ENCODE measurements at regions of chr21 and their contacts with region 1.

Region 1: DNA sequence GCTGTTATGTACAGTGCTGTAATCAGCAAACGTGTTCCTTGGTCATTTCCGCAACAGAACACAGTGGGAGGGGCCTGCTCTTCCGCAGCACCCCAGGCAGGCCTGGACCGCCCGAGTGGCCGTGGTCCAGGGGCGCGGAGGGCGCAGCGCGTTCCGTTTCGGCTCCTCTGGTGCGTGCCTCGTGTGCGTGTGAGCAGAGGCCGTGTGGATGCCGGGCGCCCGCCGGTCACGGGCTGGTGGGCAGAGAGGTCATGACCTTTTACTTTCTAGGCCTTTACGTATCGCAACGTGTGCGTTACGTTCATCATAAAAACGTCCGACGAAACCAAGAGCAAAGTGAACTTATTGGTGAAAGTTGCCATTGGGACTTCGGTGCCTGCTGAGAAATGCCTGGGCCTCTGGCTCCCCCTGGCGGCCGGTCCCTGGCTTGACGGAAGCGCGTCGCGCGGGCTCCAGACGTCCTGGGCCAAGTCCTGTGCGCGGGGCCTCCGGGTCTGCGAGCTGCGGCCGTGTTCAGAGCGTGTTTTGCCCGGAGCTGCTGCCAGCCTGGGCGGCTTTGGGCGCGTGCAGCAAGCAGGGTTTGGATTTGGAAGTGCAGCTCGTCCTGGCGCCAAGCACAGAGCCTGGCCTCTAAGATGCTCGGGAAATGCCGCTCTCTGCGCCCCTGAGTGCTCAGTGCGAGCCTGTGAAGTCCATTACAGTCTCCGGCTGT is 34.4 kb downstream of the COL18A1 start:
- DNase-seq: peak; percentile 95
- H3K4me3 Mint-ChIP-seq: peak overlapping the region; percentile 71
- H3K27ac Mint-ChIP-seq: no peak overlapping the region
- H3K4me1 Mint-ChIP-seq: no peaks in the 10 kb centered on the region
- H3K27me3 Mint-ChIP-seq: peaks cover 1% of the 10 kb centered on the region

Region 2: DNA sequence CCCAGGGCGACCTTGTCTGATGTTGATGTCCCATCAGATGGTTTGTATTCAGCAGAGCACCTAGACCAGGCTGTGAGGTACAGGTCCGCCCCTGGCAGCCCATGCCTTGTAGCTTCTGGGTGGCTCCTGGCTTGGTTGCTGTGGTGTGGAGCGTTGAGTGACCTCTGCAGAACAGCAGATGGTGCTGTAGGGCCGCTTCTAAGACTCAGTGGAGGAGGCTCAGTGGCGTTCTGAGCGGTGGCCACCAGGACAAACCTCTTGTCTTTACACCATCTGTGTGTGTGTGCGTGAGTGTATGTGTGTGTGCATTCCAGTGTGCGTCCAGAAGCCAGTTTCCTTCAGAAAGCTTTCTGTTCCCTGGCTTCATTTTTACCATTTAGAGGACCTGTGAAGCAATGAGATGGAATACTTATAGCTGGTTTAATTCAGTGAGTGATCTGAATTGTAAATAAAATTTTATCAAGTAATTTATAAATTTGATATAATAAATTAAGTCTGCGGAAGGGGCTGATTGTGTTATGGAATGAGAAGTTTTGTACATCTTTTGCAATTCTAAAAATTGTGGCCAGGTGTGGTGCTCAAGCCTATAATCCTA is 298.9 kb before region 1 on chr21:
- intact Hi-C with region 1: loop called (anchors 1 kb)
- DNase-seq: peak; percentile 89
- H3K4me3 Mint-ChIP-seq: no peak overlapping the region
- H3K27ac Mint-ChIP-seq: no peak overlapping the region
- H3K4me1 Mint-ChIP-seq: peaks cover 14% of the 10 kb centered on the region
- H3K27me3 Mint-ChIP-seq: no peaks in the 10 kb centered on the region

Region 3: GRCh38 chr21:45460611-45461368 is 21.5 kb after region 1 on chr21:
- intact Hi-C with region 1: no loop called
- DNase-seq: no peak
- H3K4me3 Mint-ChIP-seq: no peak overlapping the region
- H3K27ac Mint-ChIP-seq: no peak overlapping the region
- H3K4me1 Mint-ChIP-seq: no peaks in the 10 kb centered on the region
- H3K27me3 Mint-ChIP-seq: peaks cover 15% of the 10 kb centered on the region